Activated T-helper 1 cell treated with anti-CD3 and anti-CD28 coated beads, Interleukin-12 subunit alpha, Interleukin-12 subunit beta, Interleukin-2, Interleukin-4 antibody, amounts not matched to agents 30 ng/mL and 10 ng/mL and 1 ng/mL, durations not matched to agents 14 hours and 24 hours and 36 hours (primary cell): ENCODE measurements at regions of chr7 and their contacts with region 1.

Region 1: GRCh38 chr7:124152859-124153692 is 120.2 kb upstream of the TMEM229A start:
- DNase-seq: no peak
- H3K4me3 Mint-ChIP-seq: no peak overlapping the region
- H3K27ac Mint-ChIP-seq: no peak overlapping the region
- H3K4me1 Mint-ChIP-seq: no peaks in the 10 kb centered on the region
- H3K27me3 Mint-ChIP-seq: no peaks in the 10 kb centered on the region

Region 2: DNA sequence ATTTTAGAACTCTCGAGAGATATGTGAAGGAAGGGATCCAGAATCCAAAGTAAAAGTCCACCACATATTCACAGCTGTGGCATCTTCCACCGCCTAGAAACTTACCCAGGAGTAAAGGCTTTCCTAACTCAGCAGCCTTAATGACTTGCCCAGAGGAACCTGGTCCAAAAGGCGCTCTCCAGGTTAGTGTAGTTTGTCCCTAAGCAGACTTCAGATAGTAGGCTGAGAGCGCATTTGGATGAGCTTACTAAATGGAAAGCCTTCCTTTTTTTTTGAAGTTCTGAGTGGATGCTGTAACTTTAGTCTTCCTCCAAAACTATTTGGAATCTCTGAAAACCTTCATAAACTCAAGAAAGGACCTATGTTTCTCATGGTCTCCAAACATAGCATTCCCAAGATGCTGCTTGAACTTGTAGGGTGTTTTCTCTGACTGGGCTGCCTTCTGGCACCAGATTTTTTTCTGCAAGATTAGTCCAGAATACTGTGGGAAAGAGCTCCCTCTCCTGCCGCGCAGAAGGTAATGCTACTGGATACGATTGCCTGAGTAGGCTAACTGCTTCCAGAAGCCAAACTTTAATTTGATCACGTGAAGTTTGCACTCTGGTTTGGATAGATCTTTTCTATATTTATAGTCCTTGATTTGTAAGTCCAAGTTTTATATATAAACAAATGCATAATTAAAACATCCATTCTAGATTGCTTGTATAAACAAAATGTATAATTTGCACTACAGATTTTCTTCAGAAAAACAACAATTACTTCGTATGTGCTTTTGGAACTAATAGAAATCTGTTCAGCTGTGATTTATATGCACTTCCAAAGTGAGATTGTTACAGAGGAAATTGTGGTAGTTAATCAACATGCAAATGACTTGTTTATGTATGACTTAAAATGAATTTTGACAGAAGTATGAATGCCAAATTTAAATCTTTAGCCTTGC is 632.1 kb after region 1 on chr7:
- intact Hi-C with region 1: loop called (anchors 2 kb)
- DNase-seq: no peak
- H3K4me3 Mint-ChIP-seq: no peak overlapping the region
- H3K27ac Mint-ChIP-seq: no peak overlapping the region
- H3K4me1 Mint-ChIP-seq: no peaks in the 10 kb centered on the region
- H3K27me3 Mint-ChIP-seq: peaks cover 7% of the 10 kb centered on the region